ENCODE measurements at regions of chr3 and their contacts with region 1.

Region 1: DNA sequence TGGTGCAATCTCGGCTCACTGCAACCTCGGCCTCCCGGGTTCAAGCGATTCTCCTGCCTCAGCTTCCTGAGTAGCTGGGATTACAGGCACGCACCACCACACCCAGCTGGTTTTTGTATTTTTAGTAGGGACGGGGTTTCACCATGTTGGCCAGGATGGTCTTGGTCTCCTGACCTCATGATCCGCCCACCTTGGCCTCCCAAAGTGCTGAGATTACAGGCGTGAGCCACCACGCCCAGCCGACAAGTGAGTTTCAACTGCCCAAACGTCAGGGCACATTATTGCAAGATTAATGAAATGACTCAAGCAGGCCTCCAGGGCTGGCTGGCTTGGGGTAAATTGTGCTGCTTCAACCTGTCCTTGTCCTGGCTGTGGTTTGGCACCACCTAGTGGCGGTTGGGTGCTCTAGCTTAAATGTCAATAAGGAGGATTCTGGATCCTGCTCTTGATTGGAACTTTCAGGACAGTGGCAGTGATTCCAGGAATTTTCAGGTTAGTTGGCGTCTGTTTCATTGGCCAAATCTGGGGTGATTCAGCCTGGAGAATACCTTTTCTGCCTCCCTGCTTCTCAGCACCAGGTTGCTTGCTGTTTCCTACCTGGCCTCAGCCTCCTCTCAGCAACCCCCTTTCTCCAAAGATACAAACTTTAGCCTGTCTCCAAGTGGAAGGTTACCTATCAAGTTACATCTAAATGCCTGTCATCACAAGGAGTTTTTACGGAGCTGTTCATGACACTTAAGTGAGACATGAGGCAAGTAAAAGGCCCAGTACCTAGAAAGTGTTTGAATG is 32.4 kb upstream of the SACM1L start:
- DNase-seq: peak; percentile 81
- H3K4me3 ChIP-seq: no peak overlapping the region
- H3K27ac ChIP-seq: no peak overlapping the region
- H3K27me3 ChIP-seq: no peaks in the 10 kb centered on the region
- CTCF ChIP-seq: peak; percentile 94

Region 2: GRCh38 chr3:45244356-45244755 is 412.4 kb before region 1 on chr3:
- CTCF ChIA-PET with region 1: no interaction called
- POLR2A ChIA-PET with region 1: no interaction called
- DNase-seq: no peak
- H3K4me3 ChIP-seq: no peak overlapping the region
- H3K27ac ChIP-seq: no peak overlapping the region
- H3K27me3 ChIP-seq: peaks cover 2% of the 10 kb centered on the region
- CTCF ChIP-seq: no peak

Region 3: DNA sequence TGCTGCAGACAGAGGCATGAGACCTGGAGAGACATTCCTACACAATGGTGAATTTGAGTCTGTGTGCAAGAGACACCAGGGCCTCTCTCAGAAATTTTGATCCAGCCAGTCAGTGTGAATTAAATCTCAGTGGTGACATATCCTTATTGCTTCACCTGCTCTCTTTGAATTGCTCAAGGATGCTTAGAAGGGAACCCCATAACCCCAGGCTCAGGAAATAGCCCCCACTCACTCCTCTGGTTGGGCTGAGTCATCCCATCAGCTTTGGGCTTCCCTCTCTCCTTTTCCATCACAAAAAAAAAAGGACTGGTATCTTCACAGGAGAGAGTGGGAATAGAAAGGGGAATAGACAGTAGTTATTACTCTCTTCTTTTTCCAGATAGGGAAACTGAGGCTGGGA is 301.4 kb before region 1 on chr3:
- CTCF ChIA-PET with region 1: no interaction called
- POLR2A ChIA-PET with region 1: no interaction called
- DNase-seq: no peak
- H3K4me3 ChIP-seq: no peak overlapping the region
- H3K27ac ChIP-seq: no peak overlapping the region
- H3K27me3 ChIP-seq: peaks cover 4% of the 10 kb centered on the region
- CTCF ChIP-seq: no peak

Region 4: DNA sequence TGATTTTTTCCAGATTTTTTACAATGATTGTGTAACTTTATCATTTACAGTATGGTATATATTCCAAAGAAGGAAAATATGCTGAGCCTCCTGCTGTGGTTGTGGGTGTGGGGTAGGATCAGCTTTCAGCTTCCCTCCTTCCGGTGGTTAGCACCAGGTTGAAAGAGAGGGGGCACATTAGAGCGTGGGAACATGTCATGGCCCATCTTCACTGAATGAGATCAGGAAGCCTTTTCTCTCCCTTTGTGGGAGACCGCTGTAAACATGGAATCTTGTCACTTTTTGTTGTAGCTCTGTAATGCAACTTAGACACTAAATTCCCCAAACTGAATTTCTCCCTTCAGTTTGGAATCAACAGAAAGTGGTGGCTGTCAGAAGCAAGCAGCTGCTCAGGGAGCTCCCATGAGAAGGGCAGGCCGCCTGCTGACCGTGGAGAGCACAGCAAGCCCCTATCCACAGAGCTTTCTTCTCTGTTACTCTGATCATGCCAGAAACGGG is 148.9 kb before region 1 on chr3:
- CTCF ChIA-PET with region 1: interaction called, 217 read pairs
- POLR2A ChIA-PET with region 1: interaction called, 13 read pairs
- DNase-seq: no peak
- H3K4me3 ChIP-seq: no peak overlapping the region; the same call in 1 of the 2 replicates
- H3K27ac ChIP-seq: peak overlapping the region; percentile 97
- H3K27me3 ChIP-seq: no peaks in the 10 kb centered on the region
- CTCF ChIP-seq: peak; percentile 81

Region 5: DNA sequence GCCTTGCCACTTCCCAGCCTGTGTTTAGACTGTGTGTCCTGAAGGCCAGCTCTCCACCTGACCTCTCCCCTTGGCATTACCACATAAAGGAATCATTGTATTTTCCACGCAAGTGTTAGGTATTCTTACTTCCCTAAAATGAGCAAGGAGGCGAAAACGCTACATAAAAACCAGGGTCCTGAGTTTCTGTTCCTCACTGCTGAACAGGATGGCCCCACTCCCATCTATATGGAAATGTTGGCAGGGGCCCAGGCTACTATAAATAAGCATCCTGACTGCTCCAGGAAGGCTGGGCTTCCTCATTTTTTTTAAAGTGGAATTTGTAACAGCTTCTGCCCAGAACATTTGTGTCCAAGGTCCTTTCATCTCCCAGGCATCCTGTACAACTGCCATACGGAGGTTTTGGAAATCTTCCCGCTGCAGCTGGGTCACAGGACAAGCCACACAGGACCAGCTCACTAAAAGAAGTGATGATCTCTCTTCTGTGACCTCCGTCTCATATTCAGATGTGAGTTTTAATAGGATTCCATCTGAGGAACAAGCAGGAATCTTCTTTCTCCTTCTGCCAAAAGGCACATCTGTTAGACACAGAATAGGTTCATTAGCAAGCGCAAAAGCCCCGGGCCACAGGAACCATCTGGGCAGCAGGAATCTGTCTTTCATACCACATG is 118.7 kb before region 1 on chr3:
- CTCF ChIA-PET with region 1: interaction called, 10 read pairs
- POLR2A ChIA-PET with region 1: no interaction called
- DNase-seq: no peak
- H3K4me3 ChIP-seq: no peak overlapping the region
- H3K27ac ChIP-seq: peak overlapping the region; percentile 55
- H3K27me3 ChIP-seq: no peaks in the 10 kb centered on the region
- CTCF ChIP-seq: no peak

Region 6: DNA sequence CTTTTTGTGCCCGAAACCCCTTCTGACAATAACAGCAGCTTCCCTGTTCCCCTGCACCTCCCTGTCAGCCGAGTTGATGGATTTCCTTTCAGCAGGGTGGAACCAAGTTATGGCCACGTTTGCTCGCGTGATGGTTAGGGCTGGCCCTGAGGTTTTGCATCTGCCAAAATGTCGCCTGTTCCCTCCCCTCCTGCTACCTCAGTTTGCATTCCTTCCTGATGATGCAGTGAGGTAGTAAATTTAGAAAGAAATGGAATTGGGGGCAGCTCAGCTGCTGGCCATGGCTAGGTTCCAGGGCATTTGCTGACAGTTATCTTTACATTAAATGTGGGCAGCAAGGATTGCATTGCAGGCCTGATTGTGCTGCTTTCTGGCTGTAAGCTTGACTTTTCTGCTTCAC is 49.0 kb before region 1 on chr3:
- CTCF ChIA-PET with region 1: interaction called, 16 read pairs
- POLR2A ChIA-PET with region 1: interaction called, 12 read pairs
- DNase-seq: peak; percentile 34
- H3K4me3 ChIP-seq: peak overlapping the region; percentile 20; the same call in 1 of the 2 replicates
- H3K27ac ChIP-seq: peak overlapping the region; percentile 47
- H3K27me3 ChIP-seq: no peaks in the 10 kb centered on the region
- CTCF ChIP-seq: no peak

Region 7: GRCh38 chr3:45666757-45667431 is 10.1 kb after region 1 on chr3:
- CTCF ChIA-PET with region 1: interaction called, 18 read pairs
- POLR2A ChIA-PET with region 1: interaction called, 14 read pairs
- DNase-seq: no peak
- H3K4me3 ChIP-seq: no peak overlapping the region
- H3K27ac ChIP-seq: peak overlapping the region; percentile 92
- H3K27me3 ChIP-seq: no peaks in the 10 kb centered on the region
- CTCF ChIP-seq: no peak

Region 8: GRCh38 chr3:46599590-46599989 is 942.8 kb after region 1 on chr3:
- CTCF ChIA-PET with region 1: no interaction called
- POLR2A ChIA-PET with region 1: no interaction called
- DNase-seq: no peak
- H3K4me3 ChIP-seq: no peak overlapping the region
- H3K27ac ChIP-seq: no peak overlapping the region
- H3K27me3 ChIP-seq: peaks cover 14% of the 10 kb centered on the region
- CTCF ChIP-seq: no peak

Measured in AG04450 (cell line).